H1 (cell line): ENCODE measurements at regions of chr5 and their contacts with region 1.

Region 1: GRCh38 chr5:146662229-146662628 is 146.2 kb upstream of the GPR151 start:
- DNase-seq: no peak
- H3K4me3 ChIP-seq: no peak overlapping the region
- H3K27ac ChIP-seq: no peak overlapping the region
- H3K4me1 ChIP-seq: peaks cover 0 to 5% (median 2%) of the 10 kb centered on the region in 4 experiments; a peak in 2 of 7 replicates
- H3K27me3 ChIP-seq: no peaks in the 10 kb centered on the region
- CTCF ChIP-seq: peak in 2 of 3 experiments; percentile 29 to 55; a peak in 2 of 4 replicates
- EP300 ChIP-seq: no peak
- POLR2A ChIP-seq: no peak
- RAD21 ChIP-seq: peak; percentile 37 to 42

Region 2: DNA sequence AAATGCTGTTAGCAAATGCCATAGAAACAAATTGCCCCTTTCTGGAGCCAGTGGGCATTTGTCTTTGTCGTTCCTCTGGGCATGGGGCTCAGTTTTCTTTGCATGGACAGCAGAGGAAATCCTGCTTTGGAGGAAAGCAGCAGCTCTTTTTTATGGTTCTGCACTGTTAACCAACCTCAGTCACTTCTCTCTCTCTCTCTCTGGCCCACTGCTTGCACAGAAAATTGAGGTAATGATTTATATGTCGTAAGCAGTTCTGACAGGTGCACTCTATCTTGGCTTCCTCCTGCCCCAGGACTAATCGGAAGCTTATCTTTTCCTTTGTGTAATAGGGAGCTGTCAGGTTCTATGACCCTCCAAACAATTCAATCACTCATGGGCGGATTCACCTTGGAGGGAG is 13.4 kb after region 1 on chr5:
- CTCF ChIA-PET with region 1: interaction called, 18 read pairs
- POLR2A ChIA-PET with region 1: no interaction called
- DNase-seq: no peak
- H3K4me3 ChIP-seq: no peak overlapping the region
- H3K27ac ChIP-seq: no peak overlapping the region
- H3K4me1 ChIP-seq: peaks cover 3 to 14% (median 8%) of the 10 kb centered on the region in 4 experiments; a peak in 4 of 7 replicates
- H3K27me3 ChIP-seq: no peaks in the 10 kb centered on the region
- CTCF ChIP-seq: no peak
- EP300 ChIP-seq: no peak
- POLR2A ChIP-seq: no peak
- RAD21 ChIP-seq: no peak